Activated CD4-positive, alpha-beta memory T cell treated with anti-CD3 and anti-CD28 coated beads for 36 hours (primary cell): ENCODE measurements at regions of chr9 and their contacts with region 1.

Region 1: DNA sequence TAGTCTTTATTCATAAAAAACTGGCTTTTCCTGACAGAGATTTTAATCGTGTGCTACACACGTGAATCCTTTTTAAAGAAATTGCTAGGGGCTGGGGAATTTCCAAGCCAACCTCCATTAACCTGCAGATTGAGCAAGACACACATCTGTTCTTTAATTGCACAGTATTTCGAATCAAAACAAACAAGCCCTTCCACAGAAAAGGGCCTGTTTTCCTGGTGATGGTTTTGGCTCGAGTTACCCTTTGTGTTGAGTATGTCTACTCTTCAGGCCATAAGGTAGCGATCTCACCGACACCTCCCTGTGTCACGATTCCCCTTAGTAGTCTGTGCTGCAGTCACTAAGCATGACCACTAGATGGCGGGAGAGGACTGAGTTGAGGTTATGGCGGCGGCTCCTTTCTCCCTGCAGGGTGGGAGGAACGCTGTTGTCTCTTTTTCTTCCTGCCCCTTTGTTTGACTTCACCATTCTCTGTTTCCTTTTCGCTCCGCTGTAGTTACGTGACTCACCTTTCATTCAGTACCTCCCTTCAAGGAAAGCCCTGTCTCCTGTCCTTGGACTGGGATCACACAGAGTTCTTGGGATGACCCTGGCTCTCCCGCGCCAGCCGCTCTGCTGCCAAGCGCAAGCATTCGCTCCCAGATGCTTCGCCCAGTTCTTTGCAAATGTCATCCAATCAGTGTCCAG is 137.1 kb upstream of the SLC24A2 start:
- DNase-seq: peak; percentile 86
- H3K4me3 Mint-ChIP-seq: peak overlapping the region; percentile 50
- H3K27ac Mint-ChIP-seq: no peak overlapping the region
- H3K4me1 Mint-ChIP-seq: peaks cover 15% of the 10 kb centered on the region
- H3K27me3 Mint-ChIP-seq: peaks cover 12% of the 10 kb centered on the region

Region 2: DNA sequence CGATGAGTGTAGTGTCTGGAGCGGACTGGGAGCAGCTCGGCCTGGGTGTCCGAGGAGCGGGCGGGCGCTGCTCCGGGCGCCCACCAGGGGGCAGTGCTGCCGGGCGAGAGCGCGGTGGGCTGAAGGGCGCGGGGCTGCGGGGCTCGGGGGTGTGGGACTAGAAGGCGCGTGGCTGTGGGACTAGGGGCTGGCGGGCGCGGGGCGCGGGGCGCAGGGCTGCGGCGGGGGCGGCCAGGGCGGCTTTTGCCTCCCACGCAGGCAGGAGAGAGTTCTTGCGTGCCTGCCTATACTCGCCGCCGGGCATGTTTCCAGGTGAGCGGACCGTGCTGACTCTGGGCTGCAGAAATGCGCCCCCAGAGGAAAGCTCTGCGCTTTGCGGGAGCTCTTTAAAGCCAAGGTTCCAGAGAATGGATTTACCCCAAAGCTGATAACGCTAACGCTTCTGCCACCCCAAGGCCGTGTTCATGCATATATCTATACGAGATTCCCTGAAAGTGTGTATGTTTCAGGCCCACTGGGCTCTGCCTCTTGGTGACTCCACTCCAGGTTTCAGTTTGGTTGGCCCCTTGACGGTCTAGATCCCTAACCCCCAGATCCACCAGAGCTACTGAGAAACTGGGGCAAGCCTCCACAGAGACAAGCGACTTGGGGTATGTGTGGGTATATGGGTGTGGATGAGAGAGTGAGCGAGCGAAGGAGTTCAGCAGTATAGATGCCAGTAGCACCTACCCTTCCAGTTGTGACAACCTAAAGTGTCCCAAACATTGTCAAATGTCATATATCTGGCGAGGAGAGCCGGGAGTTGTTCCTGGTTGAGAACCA is 461.0 kb before region 1 on chr9:
- CTCF ChIA-PET with region 1: no interaction called
- POLR2A ChIA-PET with region 1: no interaction called
- intact Hi-C with region 1: loop called (anchors 5 kb)
- DNase-seq: peak; percentile 73
- H3K4me3 Mint-ChIP-seq: peak overlapping the region; percentile 72
- H3K27ac Mint-ChIP-seq: no peak overlapping the region
- H3K4me1 Mint-ChIP-seq: peaks cover 7% of the 10 kb centered on the region
- H3K27me3 Mint-ChIP-seq: no peaks in the 10 kb centered on the region

Region 3: GRCh38 chr9:19976226-19976625 is 50.3 kb after region 1 on chr9:
- CTCF ChIA-PET with region 1: no interaction called
- POLR2A ChIA-PET with region 1: no interaction called
- intact Hi-C with region 1: loop called (anchors 5 kb)
- DNase-seq: peak; percentile 45
- H3K4me3 Mint-ChIP-seq: no peak overlapping the region
- H3K27ac Mint-ChIP-seq: peak overlapping the region; percentile 74
- H3K4me1 Mint-ChIP-seq: peaks cover 23% of the 10 kb centered on the region
- H3K27me3 Mint-ChIP-seq: no peaks in the 10 kb centered on the region

Region 4: GRCh38 chr9:20209391-20210340 is 283.7 kb after region 1 on chr9:
- CTCF ChIA-PET with region 1: no interaction called
- POLR2A ChIA-PET with region 1: no interaction called
- intact Hi-C with region 1: loop called (anchors 2 kb)
- DNase-seq: peak; percentile 79
- H3K4me3 Mint-ChIP-seq: no peak overlapping the region
- H3K27ac Mint-ChIP-seq: peak overlapping the region; percentile 89
- H3K4me1 Mint-ChIP-seq: peaks cover 33% of the 10 kb centered on the region
- H3K27me3 Mint-ChIP-seq: no peaks in the 10 kb centered on the region

Region 5: DNA sequence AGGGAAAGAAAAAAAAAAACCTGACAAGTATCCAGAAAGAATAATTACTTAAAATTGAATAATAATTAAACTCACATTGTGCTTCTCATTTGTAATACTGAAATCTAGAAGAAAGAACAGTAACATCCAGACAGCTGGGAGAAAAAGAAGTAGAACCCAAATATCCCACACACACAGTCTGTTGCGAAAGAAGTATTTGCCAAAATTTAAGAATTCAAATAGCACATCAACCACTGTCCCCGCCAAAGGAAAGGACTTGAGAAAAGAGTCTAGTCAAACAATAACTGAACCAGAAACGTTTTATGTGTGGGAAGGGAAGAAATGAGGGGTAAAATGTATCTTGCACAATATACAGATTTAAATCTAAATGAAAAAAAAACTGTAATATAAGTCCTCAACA is 493.6 kb after region 1 on chr9:
- CTCF ChIA-PET with region 1: no interaction called
- POLR2A ChIA-PET with region 1: no interaction called
- intact Hi-C with region 1: loop called (anchors 5 kb)
- DNase-seq: no peak
- H3K4me3 Mint-ChIP-seq: no peak overlapping the region
- H3K27ac Mint-ChIP-seq: no peak overlapping the region
- H3K4me1 Mint-ChIP-seq: peaks cover 23% of the 10 kb centered on the region
- H3K27me3 Mint-ChIP-seq: no peaks in the 10 kb centered on the region

Region 6: GRCh38 chr9:20884985-20885593 is 959.1 kb after region 1 on chr9:
- CTCF ChIA-PET with region 1: interaction called, 3 read pairs
- POLR2A ChIA-PET with region 1: no interaction called
- intact Hi-C with region 1: loop called (anchors 1 kb)
- DNase-seq: peak; percentile 69
- H3K4me3 Mint-ChIP-seq: no peak overlapping the region
- H3K27ac Mint-ChIP-seq: no peak overlapping the region
- H3K4me1 Mint-ChIP-seq: no peaks in the 10 kb centered on the region
- H3K27me3 Mint-ChIP-seq: no peaks in the 10 kb centered on the region

Region 7: DNA sequence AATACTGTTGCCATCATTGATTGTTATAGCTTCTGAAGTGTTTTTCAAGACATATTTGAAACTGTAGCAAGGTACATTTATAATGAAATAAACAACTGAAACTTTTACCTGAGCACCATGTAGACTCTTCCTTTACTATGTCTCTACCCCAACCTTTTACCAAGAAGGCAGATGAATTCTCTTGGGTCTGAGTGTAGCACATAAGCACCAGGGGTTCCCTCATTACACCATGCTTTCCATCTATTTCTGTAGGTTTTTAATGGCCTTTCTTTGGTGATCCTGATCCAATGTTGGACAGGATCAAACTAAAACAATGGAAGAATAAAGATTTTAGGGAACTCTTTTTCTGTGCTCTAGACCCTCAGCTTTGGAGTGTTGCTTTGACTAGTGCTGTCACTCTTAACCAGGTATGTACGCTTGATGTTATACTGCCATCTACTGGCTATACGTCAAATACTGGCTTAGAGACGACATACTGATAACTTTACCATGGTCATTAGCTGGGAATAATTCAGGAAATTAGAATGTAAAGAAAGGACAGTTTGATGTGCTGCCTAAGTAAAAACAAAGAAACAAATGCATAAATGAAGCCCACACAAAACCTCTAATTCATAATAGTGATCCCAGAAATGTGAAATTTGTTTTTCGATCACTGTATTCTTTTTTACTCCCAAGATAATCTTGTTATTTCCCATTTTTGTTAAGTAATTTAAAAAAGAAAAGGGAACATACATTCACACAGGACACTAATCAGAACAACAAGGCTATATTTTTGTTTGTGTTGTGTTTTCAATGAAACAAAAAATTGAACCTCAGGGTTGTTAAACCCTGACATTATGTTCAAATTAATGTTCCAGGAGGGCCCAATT is 1185.0 kb after region 1 on chr9:
- CTCF ChIA-PET with region 1: interaction called, 3 read pairs
- POLR2A ChIA-PET with region 1: no interaction called
- intact Hi-C with region 1: loop called (anchors 1 kb)
- DNase-seq: no peak
- H3K4me3 Mint-ChIP-seq: no peak overlapping the region
- H3K27ac Mint-ChIP-seq: no peak overlapping the region
- H3K4me1 Mint-ChIP-seq: no peaks in the 10 kb centered on the region
- H3K27me3 Mint-ChIP-seq: no peaks in the 10 kb centered on the region